Right cardiac atrium (tissue), 5 donors: ENCODE measurements at regions of chr1 and their contacts with region 1.

Region 1: GRCh38 chr1:218361298-218362065 is 16.3 kb downstream of the TGFB2 start:
- DNase-seq: no peak
- ATAC-seq: peak in 1 of 2 donors; percentile 70
- H3K4me3 ChIP-seq: no peak overlapping the region
- H3K27ac ChIP-seq: no peak overlapping the region
- H3K4me1 ChIP-seq: peaks cover 2% of the 10 kb centered on the region
- H3K27me3 ChIP-seq: no peaks in the 10 kb centered on the region

Region 2: DNA sequence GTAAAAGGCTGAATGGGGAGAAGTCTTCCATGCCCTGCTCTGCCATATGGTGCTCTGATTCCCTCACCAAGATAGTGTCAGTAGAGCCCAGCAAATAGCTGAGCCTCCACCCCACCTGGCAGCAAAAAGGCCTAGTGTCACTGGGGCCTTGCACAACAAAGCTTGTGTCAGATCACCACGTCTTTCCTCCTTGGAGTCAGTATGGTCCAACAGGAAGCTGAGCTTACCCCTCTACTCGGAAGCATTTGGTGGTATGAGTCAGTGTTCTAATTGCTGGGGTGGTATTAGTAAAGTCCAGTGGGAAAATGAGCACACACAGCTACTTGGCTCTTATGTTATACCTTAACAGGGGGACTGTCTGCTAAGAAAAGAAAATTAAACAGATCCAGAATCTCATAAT is 95.1 kb before region 1 on chr1:
- intact Hi-C with region 1: no loop called
- DNase-seq: no peak
- ATAC-seq: no peak
- H3K4me3 ChIP-seq: no peak overlapping the region
- H3K27ac ChIP-seq: no peak overlapping the region
- H3K4me1 ChIP-seq: no peaks in the 10 kb centered on the region
- H3K27me3 ChIP-seq: no peaks in the 10 kb centered on the region

Region 3: GRCh38 chr1:218439541-218440295 is 78.2 kb after region 1 on chr1:
- intact Hi-C with region 1: loop called in 1 of 4 experiments (anchors 10 kb)
- DNase-seq: peak in 2 of 3 donors; percentile 30 to 67
- ATAC-seq: peak; percentile 54 to 57
- H3K4me3 ChIP-seq: no peak overlapping the region
- H3K27ac ChIP-seq: peak overlapping the region; percentile 5
- H3K4me1 ChIP-seq: peaks cover 2% of the 10 kb centered on the region
- H3K27me3 ChIP-seq: no peaks in the 10 kb centered on the region

Region 4: GRCh38 chr1:218510153-218510772 is 148.8 kb after region 1 on chr1:
- intact Hi-C with region 1: loop called in 1 of 4 experiments (anchors 10 kb)
- DNase-seq: no peak
- ATAC-seq: no peak
- H3K4me3 ChIP-seq: no peak overlapping the region
- H3K27ac ChIP-seq: no peak overlapping the region
- H3K4me1 ChIP-seq: no peaks in the 10 kb centered on the region
- H3K27me3 ChIP-seq: no peaks in the 10 kb centered on the region

Region 5: DNA sequence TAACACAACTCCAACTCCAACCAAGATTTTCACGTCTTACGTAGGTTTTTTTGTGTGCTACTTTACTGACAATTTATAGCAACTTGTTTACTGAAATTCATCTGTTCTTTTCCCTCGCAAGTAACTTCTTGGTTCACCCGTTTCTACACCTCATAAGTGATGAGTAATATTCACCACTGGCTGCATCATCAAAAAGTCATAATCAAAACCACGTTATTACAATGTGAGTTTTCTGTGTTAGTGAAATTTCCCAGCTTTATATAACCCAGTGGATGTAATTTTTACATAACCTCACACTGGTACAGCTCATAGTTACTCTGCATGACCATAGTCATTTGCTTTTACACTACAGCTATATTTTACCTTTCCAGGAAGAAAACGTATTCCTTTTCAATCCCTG is 411.1 kb after region 1 on chr1:
- intact Hi-C with region 1: no loop called
- DNase-seq: no peak
- ATAC-seq: no peak
- H3K4me3 ChIP-seq: no peak overlapping the region
- H3K27ac ChIP-seq: no peak overlapping the region
- H3K4me1 ChIP-seq: no peaks in the 10 kb centered on the region
- H3K27me3 ChIP-seq: no peaks in the 10 kb centered on the region